Upper lobe of right lung (tissue), 1 donor: ENCODE measurements at regions of chr22 and their contacts with region 1.

Region 1: DNA sequence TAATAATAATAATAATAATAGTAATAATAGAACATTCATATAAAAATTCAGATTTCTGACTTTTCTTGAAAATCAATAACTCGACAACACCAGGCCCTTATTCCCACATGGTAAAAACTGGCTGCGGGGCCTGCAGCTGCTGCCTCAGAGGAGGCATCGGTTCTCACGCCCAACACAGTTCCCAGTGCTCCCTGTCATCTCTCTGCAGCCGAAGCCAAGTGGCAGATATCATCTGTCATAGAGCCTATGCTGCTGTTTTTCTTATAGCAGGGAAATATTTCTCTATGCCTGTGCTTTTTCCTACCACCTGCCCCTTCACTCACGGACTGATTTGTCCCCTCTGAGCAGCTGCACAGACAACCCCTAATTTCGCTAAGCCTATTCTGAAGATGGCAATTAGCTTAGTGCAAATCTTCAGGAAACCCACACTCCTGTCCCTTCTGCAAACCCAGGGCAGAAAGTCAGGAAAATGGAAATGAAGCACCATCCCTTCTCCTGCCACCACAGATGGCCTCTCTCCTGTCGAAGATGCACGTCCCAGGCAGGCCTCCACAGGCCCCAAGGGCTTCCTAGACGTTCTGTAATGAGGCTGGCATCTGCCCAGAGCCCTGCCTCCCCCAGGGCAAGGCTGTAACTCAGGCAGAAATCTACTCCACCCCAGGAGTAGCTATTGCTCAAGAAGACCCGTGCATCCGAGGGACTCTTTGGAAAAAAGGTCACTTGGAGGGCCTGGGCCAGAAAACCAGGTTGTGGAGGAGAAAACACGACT is 66.6 kb downstream of the SYN3 start:
- DNase-seq: peak; percentile 76
- ATAC-seq: peak; percentile 44
- H3K4me3 ChIP-seq: no peak overlapping the region
- H3K27ac ChIP-seq: no peak overlapping the region
- H3K4me1 ChIP-seq: peaks cover 8% of the 10 kb centered on the region
- H3K27me3 ChIP-seq: no peaks in the 10 kb centered on the region
- CTCF ChIP-seq: no peak

Region 2: GRCh38 chr22:32528984-32529982 is 462.3 kb before region 1 on chr22:
- intact Hi-C with region 1: loop called (anchors 10 kb)
- DNase-seq: peak; percentile 86
- ATAC-seq: peak; percentile 85
- H3K4me3 ChIP-seq: no peak overlapping the region
- H3K27ac ChIP-seq: peak overlapping the region; percentile 71
- H3K4me1 ChIP-seq: peaks cover 40% of the 10 kb centered on the region
- H3K27me3 ChIP-seq: no peaks in the 10 kb centered on the region
- CTCF ChIP-seq: peak; percentile 83

Region 3: GRCh38 chr22:32951076-32951806 is 40.3 kb before region 1 on chr22:
- intact Hi-C with region 1: no loop called
- DNase-seq: no peak
- ATAC-seq: peak; percentile 58
- H3K4me3 ChIP-seq: no peak overlapping the region
- H3K27ac ChIP-seq: peak overlapping the region; percentile 51
- H3K4me1 ChIP-seq: peaks cover 32% of the 10 kb centered on the region
- H3K27me3 ChIP-seq: no peaks in the 10 kb centered on the region
- CTCF ChIP-seq: peak; percentile 17